Activated CD8-positive, alpha-beta T cell treated with anti-CD3 and anti-CD28 coated beads for 36 hours (primary cell): ENCODE measurements at regions of chr11 and their contacts with region 1.

Region 1: DNA sequence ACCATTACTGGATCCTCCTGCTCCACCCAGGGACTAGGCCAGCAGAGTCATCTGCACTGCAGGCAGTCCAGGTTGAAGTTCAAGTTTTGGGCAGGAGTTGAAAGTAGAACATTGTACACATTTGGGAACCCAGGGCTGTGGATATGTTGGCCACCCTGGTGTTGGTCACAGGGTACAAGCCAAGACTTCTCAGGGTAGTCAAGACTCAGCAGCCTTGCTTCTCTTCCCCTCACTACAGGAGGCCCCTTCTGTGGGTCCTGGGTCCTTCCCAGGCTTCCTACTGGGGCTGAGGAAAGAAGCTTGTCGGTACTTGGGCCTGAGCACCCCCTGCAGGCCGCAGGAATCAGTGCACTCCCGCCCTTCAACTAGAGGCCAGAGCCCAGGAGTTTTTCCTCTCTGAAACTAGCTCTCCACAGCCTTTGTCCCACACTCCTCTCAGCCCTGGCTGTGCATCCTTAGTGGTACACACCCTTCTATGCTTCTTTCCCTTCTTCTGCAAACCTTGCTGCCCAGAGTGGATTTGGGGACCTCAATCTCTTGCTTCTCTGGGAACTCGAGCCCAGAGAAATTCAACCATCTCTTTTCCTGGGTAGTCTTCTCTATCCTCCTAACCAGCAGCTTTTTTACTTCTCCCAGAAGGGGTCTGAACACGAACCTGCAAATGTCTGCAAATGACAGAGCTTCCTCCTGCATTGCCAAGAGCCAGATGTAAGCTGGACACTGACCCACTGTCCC is 2.6 kb upstream of the HPX start:
- DNase-seq: peak; percentile 67
- ATAC-seq: peak; percentile 90
- H3K4me3 Mint-ChIP-seq: no peak overlapping the region
- H3K27ac Mint-ChIP-seq: no peak overlapping the region
- H3K4me1 Mint-ChIP-seq: no peaks in the 10 kb centered on the region
- H3K27me3 Mint-ChIP-seq: no peaks in the 10 kb centered on the region
- CTCF ChIP-seq: peak; percentile 96

Region 2: GRCh38 chr11:6170226-6170625 is 273.2 kb before region 1 on chr11 and contains the start of gene OR52B2:
- CTCF ChIA-PET with region 1: no interaction called
- POLR2A ChIA-PET with region 1: no interaction called
- intact Hi-C with region 1: no loop called
- DNase-seq: no peak
- ATAC-seq: no peak
- H3K4me3 Mint-ChIP-seq: no peak within 1 kb of the TSS
- H3K27ac Mint-ChIP-seq: no peak within 1 kb of the TSS
- H3K4me1 Mint-ChIP-seq: no peaks in the 10 kb centered on the region
- H3K27me3 Mint-ChIP-seq: peaks cover 5% of the 10 kb centered on the region
- CTCF ChIP-seq: no peak
- total RNA-seq, gene OR52B2: not detected

Region 3: GRCh38 chr11:6238902-6239301 is 204.5 kb before region 1 on chr11 and contains the start of gene CNGA4:
- CTCF ChIA-PET with region 1: no interaction called
- POLR2A ChIA-PET with region 1: no interaction called
- intact Hi-C with region 1: no loop called
- DNase-seq: no peak
- ATAC-seq: no peak
- H3K4me3 Mint-ChIP-seq: no peak within 1 kb of the TSS
- H3K27ac Mint-ChIP-seq: no peak within 1 kb of the TSS
- H3K4me1 Mint-ChIP-seq: peaks cover 5% of the 10 kb centered on the region
- H3K27me3 Mint-ChIP-seq: no peaks in the 10 kb centered on the region
- CTCF ChIP-seq: no peak
- total RNA-seq, gene CNGA4: 0.18 TPM in 1 of 2 experiments, not detected in the other

Region 4: DNA sequence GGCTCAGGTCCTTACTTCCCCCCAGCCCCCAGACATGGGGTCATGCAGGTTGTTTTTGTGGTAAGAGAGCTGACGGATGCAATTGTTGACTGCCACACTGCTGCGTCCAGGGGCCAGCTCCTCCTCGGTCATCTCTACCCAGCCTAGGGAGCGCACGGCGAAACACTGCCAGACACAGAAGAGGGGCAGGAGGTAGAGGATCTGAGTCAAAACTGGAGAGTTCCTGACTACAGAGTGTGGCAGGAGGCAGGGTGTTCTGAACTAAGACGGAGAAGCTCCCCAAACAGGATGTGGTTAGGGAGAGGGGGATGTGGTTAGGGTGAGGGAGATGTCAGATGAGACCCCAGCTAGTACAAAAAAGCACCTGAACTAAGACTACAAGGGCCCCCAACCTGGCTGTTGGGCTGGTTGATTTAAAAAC is 40.9 kb before region 1 on chr11:
- CTCF ChIA-PET with region 1: interaction called, 14 read pairs
- POLR2A ChIA-PET with region 1: interaction called, 4 read pairs
- intact Hi-C with region 1: no loop called
- DNase-seq: peak; percentile 92
- ATAC-seq: peak; percentile 82
- H3K4me3 Mint-ChIP-seq: peak overlapping the region; percentile 50
- H3K27ac Mint-ChIP-seq: peak overlapping the region; percentile 93
- H3K4me1 Mint-ChIP-seq: peaks cover 75% of the 10 kb centered on the region
- H3K27me3 Mint-ChIP-seq: no peaks in the 10 kb centered on the region
- CTCF ChIP-seq: no peak

Region 5: GRCh38 chr11:6431861-6432260 is 11.6 kb before region 1 on chr11:
- CTCF ChIA-PET with region 1: interaction called, 20 read pairs
- POLR2A ChIA-PET with region 1: interaction called, 3 read pairs
- intact Hi-C with region 1: no loop called
- DNase-seq: no peak
- ATAC-seq: no peak
- H3K4me3 Mint-ChIP-seq: no peak overlapping the region
- H3K27ac Mint-ChIP-seq: no peak overlapping the region
- H3K4me1 Mint-ChIP-seq: peaks cover 3% of the 10 kb centered on the region
- H3K27me3 Mint-ChIP-seq: no peaks in the 10 kb centered on the region
- CTCF ChIP-seq: no peak

Region 6: GRCh38 chr11:6481012-6481923 is 37.8 kb after region 1 on chr11 and contains the starts of genes ARFIP2 and TIMM10B:
- CTCF ChIA-PET with region 1: interaction called, 36 read pairs
- POLR2A ChIA-PET with region 1: interaction called, 5 read pairs
- intact Hi-C with region 1: no loop called
- DNase-seq: peak; percentile 99
- ATAC-seq: peak; percentile 98
- H3K4me3 Mint-ChIP-seq: peak within 1 kb of the TSS; percentile 87
- H3K27ac Mint-ChIP-seq: peak within 1 kb of the TSS; percentile 96
- H3K4me1 Mint-ChIP-seq: peaks cover 34% of the 10 kb centered on the region
- H3K27me3 Mint-ChIP-seq: no peaks in the 10 kb centered on the region
- CTCF ChIP-seq: no peak
- total RNA-seq, gene ARFIP2: 36.9 to 38.3 TPM
- total RNA-seq, gene TIMM10B: 40.6 to 43.0 TPM

Region 7: DNA sequence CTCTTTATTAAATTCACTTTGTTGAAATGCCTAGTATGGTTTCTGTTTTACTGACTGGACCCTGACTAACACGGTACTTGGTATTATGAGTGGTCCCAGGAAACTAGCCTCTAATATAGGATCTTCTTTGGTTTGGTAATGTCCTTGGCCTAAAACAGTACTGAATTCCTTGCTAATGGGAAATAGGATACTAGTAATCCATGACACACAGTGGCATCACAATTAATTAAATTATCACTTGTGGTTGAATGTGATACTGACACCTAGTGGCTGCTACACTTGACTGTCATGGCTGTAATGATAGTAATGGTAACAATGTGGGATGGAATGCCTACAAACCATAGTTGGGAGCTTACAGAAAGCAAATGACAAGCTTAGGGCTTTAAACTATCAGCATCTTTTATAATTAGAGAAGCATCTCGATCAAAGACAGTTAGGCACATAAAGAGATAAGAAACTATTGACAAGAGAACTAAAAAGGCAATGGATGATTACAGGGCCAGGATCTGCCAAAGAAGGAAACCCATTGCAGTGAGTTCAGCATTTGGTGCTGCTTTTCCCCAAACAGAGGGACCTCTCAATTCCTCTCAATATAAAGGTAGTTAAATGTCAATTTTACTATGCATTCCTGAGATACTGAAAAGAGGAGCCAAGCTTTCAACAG is 62.3 kb after region 1 on chr11:
- CTCF ChIA-PET with region 1: interaction called, 10 read pairs
- POLR2A ChIA-PET with region 1: no interaction called
- intact Hi-C with region 1: no loop called
- DNase-seq: peak; percentile 12
- ATAC-seq: peak; percentile 69
- H3K4me3 Mint-ChIP-seq: no peak overlapping the region
- H3K27ac Mint-ChIP-seq: no peak overlapping the region
- H3K4me1 Mint-ChIP-seq: peaks cover 4% of the 10 kb centered on the region
- H3K27me3 Mint-ChIP-seq: no peaks in the 10 kb centered on the region
- CTCF ChIP-seq: peak; percentile 57

Region 8: GRCh38 chr11:6586434-6587359 is 143.3 kb after region 1 on chr11:
- CTCF ChIA-PET with region 1: no interaction called
- POLR2A ChIA-PET with region 1: no interaction called
- intact Hi-C with region 1: no loop called
- DNase-seq: no peak
- ATAC-seq: no peak
- H3K4me3 Mint-ChIP-seq: no peak overlapping the region
- H3K27ac Mint-ChIP-seq: no peak overlapping the region
- H3K4me1 Mint-ChIP-seq: no peaks in the 10 kb centered on the region
- H3K27me3 Mint-ChIP-seq: no peaks in the 10 kb centered on the region
- CTCF ChIP-seq: no peak